ENCODE measurements at regions of chr16 and their contacts with region 1.

Region 1: GRCh38 chr16:70289229-70290098 is at the start of gene AARS1:
- DNase-seq: peak; percentile 97 to 100 (median 98)
- ATAC-seq: peak; percentile 98
- H3K4me3 ChIP-seq: peak within 1 kb of the TSS; percentile 96
- H3K27ac ChIP-seq: peak within 1 kb of the TSS; percentile 100
- H3K4me1 ChIP-seq: peaks cover 9 to 12% of the 10 kb centered on the region in 2 experiments
- H3K27me3 ChIP-seq: no peaks in the 10 kb centered on the region
- CTCF ChIP-seq: no peak
- EP300 ChIP-seq: peak; percentile 85
- POLR2A ChIP-seq: peak; percentile 99
- RAD21 ChIP-seq: no peak
- polyA plus RNA-seq, gene AARS1: 50.1 to 138 TPM

Region 2: DNA sequence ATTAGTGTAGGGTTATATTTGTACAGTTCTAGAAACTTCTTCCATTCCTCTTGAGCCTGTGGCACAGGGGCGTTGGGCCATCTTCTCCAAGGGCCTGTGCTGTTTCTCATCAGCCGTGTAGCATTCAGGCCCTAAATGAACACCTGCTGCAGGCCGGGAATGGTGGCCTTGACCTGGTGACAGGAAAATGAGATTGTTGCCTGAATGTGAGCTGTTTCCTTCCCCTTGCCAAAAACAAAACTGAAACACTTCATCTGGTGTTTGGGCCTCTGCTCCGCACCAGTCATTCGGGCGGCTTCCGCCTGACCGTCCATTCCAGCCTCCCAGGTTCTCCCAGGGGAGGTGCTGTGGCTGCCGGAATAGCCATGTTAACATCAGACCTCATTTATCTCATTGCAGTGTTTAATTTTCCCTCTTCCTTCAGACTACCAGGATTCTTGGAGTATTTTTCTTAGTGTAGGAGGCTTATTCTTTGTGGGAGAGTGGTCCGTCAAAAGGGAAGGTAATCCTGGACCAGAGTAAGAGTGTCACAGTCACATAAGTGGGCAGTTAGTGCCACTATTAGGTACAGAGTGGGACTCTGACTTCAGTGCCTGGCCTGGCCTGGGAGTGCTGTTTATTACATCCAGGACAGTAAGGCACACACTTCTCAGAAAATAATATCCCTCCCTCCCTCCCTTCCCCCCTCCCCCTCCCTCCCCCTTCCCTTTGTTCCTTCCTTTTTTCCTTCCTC is 465.5 kb before region 1 on chr16:
- CTCF ChIA-PET with region 1: no interaction called
- POLR2A ChIA-PET with region 1: no interaction called
- in situ Hi-C with region 1: no loop called
- intact Hi-C with region 1: no loop called
- DNase-seq: no peak
- ATAC-seq: no peak
- H3K4me3 ChIP-seq: no peak overlapping the region
- H3K27ac ChIP-seq: no peak overlapping the region
- H3K4me1 ChIP-seq: no peaks in the 10 kb centered on the region; a peak in 1 of 5 replicates
- H3K27me3 ChIP-seq: no peaks in the 10 kb centered on the region
- CTCF ChIP-seq: no peak
- EP300 ChIP-seq: no peak
- POLR2A ChIP-seq: no peak
- RAD21 ChIP-seq: no peak

Region 3: DNA sequence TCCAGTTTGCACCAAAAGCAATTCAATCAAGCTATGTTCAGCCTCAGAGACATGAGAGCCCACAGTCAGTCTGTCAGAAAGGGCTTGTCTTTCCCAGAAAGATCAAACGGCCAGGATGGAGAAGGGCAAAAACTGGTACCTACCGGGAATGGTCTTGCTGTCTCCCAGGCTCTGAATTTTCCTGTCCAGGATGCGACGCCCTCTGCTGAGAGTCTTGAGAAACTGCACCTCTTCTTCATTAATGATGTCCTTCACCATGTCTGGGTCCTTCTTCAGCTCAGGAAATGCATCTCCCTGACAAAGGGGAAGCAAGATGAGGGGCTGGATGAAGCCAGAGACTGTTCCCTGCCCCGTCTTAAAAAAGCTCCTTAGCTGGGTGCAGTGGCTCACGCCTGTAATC is 21.9 kb before region 1 on chr16:
- CTCF ChIA-PET with region 1: no interaction called
- POLR2A ChIA-PET with region 1: interaction called, 48 read pairs
- in situ Hi-C with region 1: no loop called
- intact Hi-C with region 1: no loop called
- DNase-seq: peak; percentile 36 to 62 (median 40)
- ATAC-seq: peak; percentile 78
- H3K4me3 ChIP-seq: no peak overlapping the region
- H3K27ac ChIP-seq: no peak overlapping the region
- H3K4me1 ChIP-seq: no peaks in the 10 kb centered on the region
- H3K27me3 ChIP-seq: no peaks in the 10 kb centered on the region
- CTCF ChIP-seq: peak; percentile 55 to 73 (median 56)
- EP300 ChIP-seq: no peak
- POLR2A ChIP-seq: no peak
- RAD21 ChIP-seq: no peak

Region 4: DNA sequence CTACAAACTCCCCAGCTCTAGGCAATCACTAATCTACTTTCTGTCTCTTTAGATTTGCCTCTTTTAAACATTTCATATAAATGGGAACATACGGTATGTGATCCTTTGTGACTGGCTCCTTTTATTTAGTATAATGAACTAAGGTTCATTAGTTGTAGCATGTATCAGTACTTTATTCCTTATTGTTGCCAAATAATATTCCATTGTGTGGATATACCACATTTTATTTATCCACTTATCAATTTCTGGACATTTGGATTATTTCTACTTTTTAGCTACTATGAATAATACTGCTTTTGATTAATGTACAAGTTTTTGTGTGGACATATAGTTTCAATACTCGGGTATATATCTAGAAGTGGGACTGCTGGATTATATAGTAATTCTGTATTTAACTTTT is 17.4 kb after region 1 on chr16:
- CTCF ChIA-PET with region 1: no interaction called
- POLR2A ChIA-PET with region 1: interaction called, 13 read pairs
- in situ Hi-C with region 1: no loop called
- intact Hi-C with region 1: no loop called
- DNase-seq: no peak
- ATAC-seq: no peak
- H3K4me3 ChIP-seq: no peak overlapping the region
- H3K27ac ChIP-seq: no peak overlapping the region
- H3K4me1 ChIP-seq: no peaks in the 10 kb centered on the region
- H3K27me3 ChIP-seq: no peaks in the 10 kb centered on the region
- CTCF ChIP-seq: no peak
- EP300 ChIP-seq: no peak
- POLR2A ChIP-seq: no peak
- RAD21 ChIP-seq: no peak

Region 5: GRCh38 chr16:70345840-70346239 is 56.4 kb after region 1 on chr16:
- CTCF ChIA-PET with region 1: no interaction called
- POLR2A ChIA-PET with region 1: interaction called, 14 read pairs
- in situ Hi-C with region 1: no loop called
- intact Hi-C with region 1: loop called (anchors 2 kb)
- DNase-seq: no peak
- ATAC-seq: no peak
- H3K4me3 ChIP-seq: peak overlapping the region; percentile 84
- H3K27ac ChIP-seq: peak overlapping the region; percentile 93
- H3K4me1 ChIP-seq: peaks cover 4 to 6% of the 10 kb centered on the region in 2 experiments; a peak in 4 of 5 replicates
- H3K27me3 ChIP-seq: no peaks in the 10 kb centered on the region
- CTCF ChIP-seq: no peak
- EP300 ChIP-seq: no peak
- POLR2A ChIP-seq: no peak
- RAD21 ChIP-seq: no peak

Region 6: DNA sequence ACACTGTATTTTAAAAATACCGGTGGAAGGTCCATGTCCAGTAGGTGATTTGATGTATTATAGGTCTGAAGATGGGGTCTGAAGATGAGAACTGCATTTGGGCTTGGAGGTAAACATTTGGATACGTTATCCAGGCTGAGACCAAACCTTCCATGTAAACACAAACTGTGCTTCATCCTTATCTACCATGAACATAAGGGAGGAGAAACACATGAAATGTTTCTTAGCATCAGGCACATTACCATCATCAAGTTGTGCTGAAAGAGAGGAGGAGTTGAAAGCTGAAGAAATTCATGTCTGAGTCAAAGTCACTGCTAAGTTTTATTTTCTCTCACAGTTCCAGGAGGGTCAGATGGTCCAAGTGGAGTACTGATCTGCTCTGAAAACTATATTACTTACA is 245.5 kb after region 1 on chr16:
- CTCF ChIA-PET with region 1: no interaction called
- POLR2A ChIA-PET with region 1: no interaction called
- in situ Hi-C with region 1: loop called (anchors 5 kb)
- intact Hi-C with region 1: no loop called
- DNase-seq: peak; percentile 27 to 32 (median 28)
- ATAC-seq: peak; percentile 59
- H3K4me3 ChIP-seq: no peak overlapping the region
- H3K27ac ChIP-seq: no peak overlapping the region
- H3K4me1 ChIP-seq: peaks cover 0 to 4% of the 10 kb centered on the region in 2 experiments; a peak in 1 of 5 replicates
- H3K27me3 ChIP-seq: no peaks in the 10 kb centered on the region
- CTCF ChIP-seq: no peak
- EP300 ChIP-seq: no peak
- POLR2A ChIP-seq: no peak
- RAD21 ChIP-seq: no peak

Measured in K562 (cell line).